ENCODE measurements at regions of chr11 and their contacts with region 1.

Region 1: DNA sequence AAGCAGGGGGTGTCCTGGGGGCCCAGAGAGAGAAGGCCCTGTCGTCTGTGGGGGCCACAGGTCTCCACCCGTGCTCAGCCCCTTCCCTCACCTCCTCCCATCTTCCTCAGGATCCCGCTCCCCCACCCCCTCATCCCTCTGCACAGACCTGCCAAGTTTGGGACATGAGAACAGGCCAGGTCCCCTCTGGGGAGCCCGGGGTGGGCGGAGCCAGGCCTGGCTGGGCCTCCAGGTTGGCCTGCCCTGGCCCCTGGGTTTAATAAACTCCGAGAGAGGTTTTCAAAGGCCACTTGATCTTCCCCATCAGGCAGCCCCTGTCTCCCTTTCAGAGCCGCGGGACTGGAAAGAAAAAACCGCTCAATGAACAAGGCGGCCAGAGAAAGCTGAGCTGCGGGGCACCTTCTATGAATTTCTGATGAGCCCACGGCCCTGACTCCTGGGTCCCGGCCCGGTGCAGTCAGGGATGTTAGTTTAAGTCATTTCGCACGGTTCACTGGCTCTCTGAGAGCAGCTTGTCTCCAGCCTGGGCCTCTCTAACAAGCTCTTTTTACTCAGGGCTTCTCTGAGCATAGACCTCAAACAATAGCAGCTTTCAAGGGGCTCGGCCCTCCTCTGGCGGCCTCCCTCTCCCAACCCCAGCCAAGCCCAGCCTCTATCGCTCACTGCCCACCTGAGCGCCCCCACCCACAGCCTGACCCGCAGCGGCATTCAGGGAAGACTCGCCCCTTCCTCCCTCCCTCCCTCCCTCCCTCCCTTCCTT is 64.8 kb downstream of the RPUSD4 start:
- DNase-seq: no peak
- ATAC-seq: peak; percentile 32

Region 2: GRCh38 chr11:126122863-126123262 is 23.8 kb before region 1 on chr11:
- intact Hi-C with region 1: no loop called
- DNase-seq: no peak
- ATAC-seq: no peak

Region 3: GRCh38 chr11:126181939-126182730 is 35.5 kb after region 1 on chr11:
- intact Hi-C with region 1: loop called (anchors 5 kb)
- DNase-seq: no peak
- ATAC-seq: no peak